IMR-90 (cell line): ENCODE measurements at regions of chr12 and their contacts with region 1.

Region 1: GRCh38 chr12:80622271-80622670 is 85.2 kb upstream of the MYF6 start:
- DNase-seq: no peak
- ATAC-seq: no peak
- H3K4me3 ChIP-seq: no peak overlapping the region
- H3K27ac ChIP-seq: no peak overlapping the region
- H3K4me1 ChIP-seq: no peaks in the 10 kb centered on the region; the same call in 1 of the 2 replicates
- H3K27me3 ChIP-seq: no peaks in the 10 kb centered on the region
- CTCF ChIP-seq: peak; percentile 36
- POLR2A ChIP-seq: no peak
- RAD21 ChIP-seq: peak; percentile 29; the same call in 1 of the 2 replicates

Region 2: DNA sequence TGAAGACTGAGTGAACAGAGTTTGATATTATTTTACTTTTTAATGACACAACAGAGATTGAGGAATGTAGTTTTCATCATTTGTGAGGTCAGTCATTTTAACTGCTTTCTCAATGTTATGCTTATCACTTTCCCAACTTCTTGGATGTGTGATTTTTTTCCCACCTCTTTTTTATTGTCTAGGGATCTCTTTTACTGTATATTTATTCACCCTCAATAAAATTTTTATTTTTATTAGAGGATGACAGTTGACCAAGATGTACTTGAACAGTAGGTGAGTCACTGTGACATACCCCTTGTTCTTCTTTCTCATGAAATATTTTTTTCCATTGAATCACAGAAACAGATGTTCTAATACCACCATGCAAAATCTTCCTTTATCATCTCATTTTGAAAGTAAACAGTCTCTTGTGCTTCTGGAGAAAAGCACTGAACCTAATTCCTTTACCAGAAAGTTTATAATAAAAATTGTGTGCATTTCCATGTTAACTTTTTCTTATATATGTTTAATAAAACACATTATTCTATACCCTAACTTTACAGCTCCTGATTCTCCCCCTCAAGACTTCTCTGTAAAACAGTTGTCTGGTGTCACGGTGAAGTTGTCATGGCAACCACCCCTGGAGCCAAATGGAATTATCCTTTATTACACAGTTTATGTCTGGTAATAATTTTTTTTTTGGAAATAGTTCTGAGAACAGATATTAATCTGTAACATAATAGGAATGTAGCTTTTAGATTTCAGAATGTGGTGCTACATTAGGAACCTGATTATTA is 112.3 kb before region 1 on chr12:
- CTCF ChIA-PET with region 1: no interaction called
- POLR2A ChIA-PET with region 1: no interaction called
- dilution Hi-C with region 1: no loop called
- in situ Hi-C with region 1: loop called (anchors 25 kb)
- intact Hi-C with region 1: no loop called
- DNase-seq: peak; percentile 87
- ATAC-seq: peak; percentile 59
- H3K4me3 ChIP-seq: no peak overlapping the region
- H3K27ac ChIP-seq: peak overlapping the region; percentile 49; the same call in 1 of the 2 replicates
- H3K4me1 ChIP-seq: no peaks in the 10 kb centered on the region; the same call in 1 of the 2 replicates
- H3K27me3 ChIP-seq: no peaks in the 10 kb centered on the region
- CTCF ChIP-seq: no peak
- POLR2A ChIP-seq: no peak
- RAD21 ChIP-seq: no peak

Region 3: GRCh38 chr12:80648881-80649280 is 26.6 kb after region 1 on chr12:
- CTCF ChIA-PET with region 1: no interaction called
- POLR2A ChIA-PET with region 1: no interaction called
- dilution Hi-C with region 1: no loop called
- in situ Hi-C with region 1: no loop called
- intact Hi-C with region 1: no loop called
- DNase-seq: peak; percentile 88
- ATAC-seq: peak; percentile 80
- H3K4me3 ChIP-seq: no peak overlapping the region
- H3K27ac ChIP-seq: no peak overlapping the region
- H3K4me1 ChIP-seq: peaks cover 3% of the 10 kb centered on the region; the same call in 1 of the 2 replicates
- H3K27me3 ChIP-seq: no peaks in the 10 kb centered on the region
- CTCF ChIP-seq: no peak
- POLR2A ChIP-seq: no peak
- RAD21 ChIP-seq: no peak

Region 4: DNA sequence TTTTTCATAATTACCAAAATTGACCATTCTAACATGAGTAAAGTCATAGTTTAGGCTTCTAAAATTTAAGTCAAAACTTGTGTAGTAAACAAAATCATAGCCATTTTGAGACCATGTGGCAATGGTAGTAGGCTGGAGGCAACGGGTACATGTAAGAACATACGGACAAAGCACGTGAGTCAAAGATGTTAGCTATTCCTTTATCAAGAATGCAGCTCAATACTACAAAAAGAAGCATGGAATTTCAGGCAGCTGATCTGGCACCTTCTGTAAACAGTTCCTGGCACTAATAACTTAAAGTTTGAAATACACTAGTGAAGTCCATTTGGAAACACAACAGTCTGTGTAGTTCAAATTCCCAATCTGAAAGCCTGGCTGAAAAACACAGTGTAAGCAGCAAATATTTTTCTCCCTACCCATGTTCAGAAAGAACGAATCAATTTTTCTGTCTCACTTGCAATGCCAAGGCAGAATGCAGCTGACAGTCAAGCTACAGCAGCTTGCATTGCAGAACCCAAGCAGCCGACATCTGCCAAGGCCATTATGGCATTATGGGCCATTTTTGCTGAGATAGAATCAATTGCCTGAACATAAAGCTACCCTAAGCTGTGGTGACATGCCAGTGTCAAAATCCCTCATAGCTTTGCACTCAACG is 123.7 kb after region 1 on chr12:
- CTCF ChIA-PET with region 1: no interaction called
- POLR2A ChIA-PET with region 1: no interaction called
- dilution Hi-C with region 1: no loop called
- in situ Hi-C with region 1: no loop called
- intact Hi-C with region 1: loop called (anchors 5 kb)
- DNase-seq: no peak
- ATAC-seq: no peak
- H3K4me3 ChIP-seq: no peak overlapping the region
- H3K27ac ChIP-seq: no peak overlapping the region
- H3K4me1 ChIP-seq: no peaks in the 10 kb centered on the region
- H3K27me3 ChIP-seq: no peaks in the 10 kb centered on the region
- CTCF ChIP-seq: no peak
- POLR2A ChIP-seq: no peak
- RAD21 ChIP-seq: no peak

Region 5: GRCh38 chr12:80936498-80937390 is 314.5 kb after region 1 on chr12:
- CTCF ChIA-PET with region 1: no interaction called
- POLR2A ChIA-PET with region 1: no interaction called
- dilution Hi-C with region 1: no loop called
- in situ Hi-C with region 1: loop called (anchors 25 kb)
- intact Hi-C with region 1: no loop called
- DNase-seq: peak; percentile 42
- ATAC-seq: peak; percentile 81
- H3K4me3 ChIP-seq: peak overlapping the region; percentile 98
- H3K27ac ChIP-seq: peak overlapping the region; percentile 74
- H3K4me1 ChIP-seq: no peaks in the 10 kb centered on the region
- H3K27me3 ChIP-seq: no peaks in the 10 kb centered on the region
- CTCF ChIP-seq: no peak
- POLR2A ChIP-seq: no peak
- RAD21 ChIP-seq: no peak